Activated naive CD8-positive, alpha-beta T cell treated with anti-CD3 and anti-CD28 coated beads, Interleukin-2, amount 10 ng/mL, durations not matched to agents 7 days and 5 days (primary cell): ENCODE measurements at regions of chr11 and their contacts with region 1.

Region 1: GRCh38 chr11:116772443-116773202 is at the start of gene BUD13:
- DNase-seq: peak; percentile 98
- ATAC-seq: peak; percentile 92
- H3K4me3 Mint-ChIP-seq: peak within 1 kb of the TSS; percentile 96
- H3K27ac Mint-ChIP-seq: peak within 1 kb of the TSS; percentile 95
- H3K4me1 Mint-ChIP-seq: peaks cover 34% of the 10 kb centered on the region
- H3K27me3 Mint-ChIP-seq: no peaks in the 10 kb centered on the region
- total RNA-seq, gene BUD13: 32.1 to 33.0 TPM

Region 2: GRCh38 chr11:116732271-116733042 is 40.2 kb before region 1 on chr11:
- POLR2A ChIA-PET with region 1: no interaction called
- DNase-seq: peak; percentile 60
- ATAC-seq: peak; percentile 81
- H3K4me3 Mint-ChIP-seq: no peak overlapping the region
- H3K27ac Mint-ChIP-seq: no peak overlapping the region
- H3K4me1 Mint-ChIP-seq: peaks cover 8% of the 10 kb centered on the region
- H3K27me3 Mint-ChIP-seq: no peaks in the 10 kb centered on the region

Region 3: DNA sequence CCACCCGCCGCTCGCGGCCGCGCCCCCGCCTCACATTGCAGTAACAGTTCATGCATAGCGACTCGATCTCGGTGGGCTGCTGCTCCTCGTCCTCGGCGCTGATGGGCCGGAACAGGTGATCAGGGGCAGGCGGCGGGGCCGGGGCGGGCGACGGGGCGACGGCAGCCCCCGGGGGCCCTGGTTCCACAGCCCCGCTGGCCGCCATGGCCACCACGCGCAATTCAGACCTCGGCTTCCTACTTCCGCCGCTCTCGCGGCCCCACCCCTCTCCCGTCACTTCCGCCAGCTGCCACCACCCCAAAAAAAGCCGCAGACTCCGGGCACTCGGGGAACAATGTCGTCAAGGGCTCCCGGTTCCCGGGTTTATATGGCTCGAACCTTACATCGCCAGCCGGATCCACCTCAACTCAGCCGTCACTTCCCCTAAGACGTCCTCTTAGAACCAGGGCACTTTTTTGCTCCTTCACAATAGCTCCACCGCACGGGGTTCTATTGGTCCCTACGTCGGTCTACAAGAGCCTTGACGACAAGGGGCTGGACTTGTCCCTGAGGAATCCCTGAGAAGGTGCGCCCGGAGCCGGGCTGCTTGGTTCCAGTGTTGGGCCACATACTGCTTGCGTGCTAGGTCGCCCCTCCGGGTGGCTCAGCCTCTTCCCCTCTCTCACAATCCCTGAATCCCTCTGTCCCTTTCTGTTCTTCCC is 15.3 kb after region 1 on chr11 and contains the start of gene ZPR1:
- POLR2A ChIA-PET with region 1: interaction called, 26 read pairs
- DNase-seq: peak; percentile 89
- ATAC-seq: peak; percentile 78
- H3K4me3 Mint-ChIP-seq: peak within 1 kb of the TSS; percentile 96
- H3K27ac Mint-ChIP-seq: peak within 1 kb of the TSS; percentile 96
- H3K4me1 Mint-ChIP-seq: peaks cover 27% of the 10 kb centered on the region
- H3K27me3 Mint-ChIP-seq: peaks cover 3% of the 10 kb centered on the region
- total RNA-seq, gene ZPR1: 53.6 to 57.3 TPM